ENCODE measurements at regions of chr2 and their contacts with region 1.

Region 1: GRCh38 chr2:33441235-33441810 is 35.1 kb upstream of the RASGRP3 start:
- DNase-seq: peak in 8 of 10 donors; percentile 56 to 77 (median 64)
- H3K4me3 ChIP-seq: no peak overlapping the region
- H3K27ac ChIP-seq: peak overlapping the region in 51 of 59 donors; percentile 3 to 93 (median 77)
- H3K27me3 ChIP-seq: no peaks in the 10 kb centered on the region
- CTCF ChIP-seq: peak in 55 of 56 donors; percentile 51 to 88 (median 72)

Region 2: GRCh38 chr2:33134086-33134771 is 307.1 kb before region 1 on chr2:
- intact Hi-C with region 1: loop called in 1 of 2 experiments (anchors 10 kb)
- DNase-seq: peak in 3 of 10 donors; percentile 28 to 43 (median 41)
- H3K4me3 ChIP-seq: peak overlapping the region; percentile 20 to 70 (median 51)
- H3K27ac ChIP-seq: peak overlapping the region in 38 of 59 donors; percentile 1 to 78 (median 32)
- H3K27me3 ChIP-seq: no peaks in the 10 kb centered on the region
- CTCF ChIP-seq: peak in 4 of 56 donors; percentile 12 to 20 (median 16)

Region 3: GRCh38 chr2:33372940-33373553 is 68.3 kb before region 1 on chr2:
- intact Hi-C with region 1: loop called (anchors 2 to 5 kb)
- DNase-seq: no peak
- H3K4me3 ChIP-seq: peak overlapping the region in 3 of 59 donors; percentile 6 to 30 (median 22)
- H3K27ac ChIP-seq: peak overlapping the region in 10 of 59 donors; percentile 8 to 87 (median 80)
- H3K27me3 ChIP-seq: no peaks in the 10 kb centered on the region
- CTCF ChIP-seq: peak; percentile 58 to 87 (median 80)

Region 4: DNA sequence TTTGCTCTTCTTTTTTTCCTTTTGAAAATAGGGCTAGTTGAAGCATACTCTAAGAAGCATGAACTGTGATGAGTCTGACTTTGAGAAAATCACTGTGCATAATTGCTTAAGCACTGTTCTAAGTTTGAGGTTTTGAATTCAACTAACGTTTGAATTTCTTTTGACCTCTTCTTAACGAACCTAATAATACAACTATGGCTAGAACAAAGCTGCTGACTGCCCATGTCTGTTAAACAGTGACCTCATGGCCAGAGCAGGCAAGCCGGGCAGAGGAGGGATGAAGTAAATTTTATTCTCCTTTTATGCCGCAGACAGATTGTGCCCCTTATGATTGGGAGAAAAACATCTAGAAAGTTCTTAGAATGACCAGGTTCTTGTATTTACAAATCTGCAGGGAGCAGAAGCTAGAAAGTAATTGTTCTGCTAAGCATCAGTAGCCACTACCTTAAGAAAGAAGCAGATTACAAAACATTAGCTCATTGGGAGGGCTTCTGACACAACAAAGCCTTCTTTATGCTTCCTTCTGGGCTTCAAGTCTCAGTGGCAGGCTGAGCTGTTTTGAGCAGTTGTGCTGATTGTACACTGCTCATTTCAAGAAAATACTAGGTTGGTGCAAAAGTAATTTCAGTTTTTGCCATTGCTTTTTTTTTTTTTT is 62.6 kb before region 1 on chr2:
- intact Hi-C with region 1: loop called (anchors 2 to 5 kb)
- DNase-seq: peak in 2 of 10 donors; percentile 40 to 45
- H3K4me3 ChIP-seq: peak overlapping the region in 7 of 59 donors; percentile 5 to 30 (median 17)
- H3K27ac ChIP-seq: peak overlapping the region; percentile 14 to 94 (median 82)
- H3K27me3 ChIP-seq: no peaks in the 10 kb centered on the region
- CTCF ChIP-seq: peak in 1 of 56 donors; percentile 12

Region 5: GRCh38 chr2:33412920-33413319 is 28.4 kb before region 1 on chr2:
- intact Hi-C with region 1: loop called in 1 of 2 experiments (anchors 2 kb)
- DNase-seq: no peak
- H3K4me3 ChIP-seq: no peak overlapping the region
- H3K27ac ChIP-seq: peak overlapping the region in 2 of 59 donors; percentile 13 to 43
- H3K27me3 ChIP-seq: no peaks in the 10 kb centered on the region
- CTCF ChIP-seq: peak in 54 of 56 donors; percentile 23 to 75 (median 51)

Region 6: DNA sequence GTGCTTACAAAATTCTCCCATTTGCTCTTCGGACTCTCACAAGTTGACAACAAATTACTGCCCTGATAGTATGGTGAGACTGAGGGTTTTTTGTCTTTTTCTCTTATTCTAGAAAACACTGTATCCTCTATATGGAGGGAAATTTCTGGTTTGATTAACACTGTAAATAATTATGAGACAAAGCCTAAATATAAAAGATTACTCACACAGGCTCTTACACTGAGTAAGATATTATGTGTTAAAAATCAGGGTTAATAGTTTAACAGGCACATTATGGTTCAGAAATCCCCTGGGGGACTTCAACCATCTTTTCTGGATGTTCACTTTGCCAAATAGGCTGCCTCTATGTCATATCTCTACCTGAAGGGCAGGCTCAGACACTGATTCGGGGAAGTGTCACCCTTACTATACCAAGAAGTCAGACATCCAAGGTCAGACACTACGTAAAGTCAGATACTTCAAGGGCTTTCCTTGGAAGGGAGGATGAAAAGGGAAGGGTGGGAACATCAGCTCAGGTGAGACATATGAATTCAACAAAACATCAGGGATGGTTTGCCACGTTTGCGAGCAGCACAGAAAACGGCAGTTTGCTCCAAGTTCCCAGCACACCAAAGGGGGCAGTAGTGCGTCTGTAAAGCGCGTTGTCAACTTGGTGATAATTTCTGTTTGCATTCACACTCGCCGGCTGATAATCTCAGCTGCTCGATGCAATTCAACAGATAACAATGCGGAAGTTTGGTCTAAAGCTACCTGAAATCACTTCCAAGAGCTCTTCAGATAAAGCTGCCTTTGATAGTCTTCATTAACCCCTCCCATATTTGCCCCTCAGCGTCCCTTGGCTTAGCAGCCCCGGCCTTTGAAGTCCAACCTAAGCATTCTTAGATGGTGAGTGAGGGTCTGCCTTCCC is 34.2 kb after region 1 on chr2:
- intact Hi-C with region 1: loop called in 1 of 2 experiments (anchors 2 kb)
- DNase-seq: peak; percentile 30 to 87 (median 78)
- H3K4me3 ChIP-seq: peak overlapping the region; percentile 50 to 84 (median 72)
- H3K27ac ChIP-seq: peak overlapping the region; percentile 83 to 99 (median 97)
- H3K27me3 ChIP-seq: no peaks in the 10 kb centered on the region
- CTCF ChIP-seq: peak; percentile 65 to 92 (median 84)